Ovary (tissue), 10 donors: ENCODE measurements at regions of chr1 and their contacts with region 1.

Region 1: DNA sequence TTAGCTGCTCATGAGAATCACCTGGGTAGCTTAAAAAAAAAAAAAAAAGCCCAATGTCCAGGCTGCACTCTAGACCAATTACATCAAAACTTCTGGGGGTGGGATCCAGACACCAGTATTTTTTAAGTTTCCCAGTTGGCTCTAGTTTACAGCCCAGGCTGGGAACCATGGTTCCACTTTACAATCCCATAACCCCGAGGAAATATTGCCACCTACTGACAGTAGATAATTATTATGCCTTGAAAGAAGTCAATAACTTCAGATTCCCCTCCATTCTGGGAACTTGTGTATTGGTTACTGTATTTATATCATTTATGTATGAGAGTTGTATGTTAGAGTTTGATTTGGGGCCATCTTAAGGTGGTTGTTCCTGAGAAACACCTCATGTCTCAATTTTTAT is 100.2 kb downstream of the SPATA46 start:
- DNase-seq: no peak
- H3K4me3 ChIP-seq: no peak overlapping the region
- H3K27ac ChIP-seq: no peak overlapping the region
- H3K4me1 ChIP-seq: no peaks in the 10 kb centered on the region
- H3K27me3 ChIP-seq: no peaks in the 10 kb centered on the region
- CTCF ChIP-seq: no peak
- EP300 ChIP-seq: no peak
- POLR2A ChIP-seq: no peak

Region 2: DNA sequence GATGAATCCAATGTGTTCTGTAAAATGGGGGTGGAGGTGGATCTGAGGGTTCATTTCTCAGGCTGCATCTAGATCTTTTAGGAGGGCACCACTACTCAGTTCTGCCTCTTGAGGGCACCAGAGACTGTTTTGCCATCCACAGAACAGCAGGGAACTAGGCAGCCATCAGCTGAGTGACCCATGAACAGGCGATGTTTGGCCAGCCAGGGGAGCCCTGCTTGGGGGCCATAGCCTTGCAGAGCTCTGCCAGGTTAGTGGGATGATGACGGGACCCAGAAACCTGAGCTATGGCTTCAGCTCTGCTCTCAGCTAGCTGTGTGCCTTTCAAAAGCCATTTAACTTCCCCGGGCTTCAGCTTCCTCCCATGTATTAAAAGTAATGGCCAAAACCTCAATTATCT is 220.4 kb before region 1 on chr1:
- intact Hi-C with region 1: loop called in 1 of 4 experiments (anchors 10 kb)
- DNase-seq: peak; percentile 14 to 66 (median 37)
- H3K4me3 ChIP-seq: no peak overlapping the region
- H3K27ac ChIP-seq: no peak overlapping the region
- H3K4me1 ChIP-seq: no peaks in the 10 kb centered on the region
- H3K27me3 ChIP-seq: no peaks in the 10 kb centered on the region
- CTCF ChIP-seq: peak in 2 of 3 donors; percentile 28 to 36
- EP300 ChIP-seq: no peak
- POLR2A ChIP-seq: no peak